Heart right ventricle (tissue), 16 donors: ENCODE measurements at regions of chr9 and their contacts with region 1.

Region 1: DNA sequence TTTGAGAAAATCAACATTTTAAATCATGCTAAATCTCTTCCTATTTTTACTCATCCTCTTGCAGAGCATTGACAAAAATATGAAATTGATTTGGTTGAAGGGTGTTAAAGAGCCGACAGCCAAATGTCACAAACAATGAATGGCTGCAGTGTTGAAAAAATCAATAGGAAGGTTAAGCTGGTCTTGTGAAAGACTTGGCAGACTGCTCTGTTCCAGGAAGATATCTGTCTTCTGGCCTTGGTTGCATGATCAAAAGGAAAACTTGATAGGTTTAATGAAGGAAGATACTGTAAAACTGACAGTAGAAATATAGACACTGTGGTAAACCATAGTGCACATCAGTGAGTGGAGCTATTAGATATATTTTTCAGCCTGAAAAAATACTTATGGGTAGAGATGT is 103.6 kb downstream of the PBX3 start:
- DNase-seq: no peak
- ATAC-seq: no peak
- H3K4me3 ChIP-seq: no peak overlapping the region
- H3K27ac ChIP-seq: no peak overlapping the region
- H3K4me1 ChIP-seq: peaks cover 0 to 30% (median 10%) of the 10 kb centered on the region in 9 donors
- H3K27me3 ChIP-seq: no peaks in the 10 kb centered on the region
- CTCF ChIP-seq: no peak

Region 2: GRCh38 chr9:125829743-125830142 is 21.0 kb before region 1 on chr9:
- intact Hi-C with region 1: loop called in 1 of 10 experiments (anchors 1 kb)
- DNase-seq: peak in 1 of 2 donors; percentile 21
- ATAC-seq: peak in 6 of 8 donors; percentile 58 to 86 (median 70)
- H3K4me3 ChIP-seq: peak overlapping the region in 9 of 10 donors; percentile 6 to 55 (median 49)
- H3K27ac ChIP-seq: peak overlapping the region in 4 of 10 donors; percentile 8 to 63 (median 22)
- H3K4me1 ChIP-seq: peaks cover 0 to 20% (median 0%) of the 10 kb centered on the region in 9 donors
- H3K27me3 ChIP-seq: no peaks in the 10 kb centered on the region
- CTCF ChIP-seq: no peak

Region 3: GRCh38 chr9:125904155-125904851 is 53.5 kb after region 1 on chr9:
- intact Hi-C with region 1: no loop called
- DNase-seq: no peak
- ATAC-seq: peak in 4 of 8 donors; percentile 37 to 61 (median 50)
- H3K4me3 ChIP-seq: peak overlapping the region in 1 of 10 donors; percentile 5
- H3K27ac ChIP-seq: peak overlapping the region in 1 of 10 donors; percentile 57
- H3K4me1 ChIP-seq: peaks cover 0 to 43% (median 15%) of the 10 kb centered on the region in 9 donors
- H3K27me3 ChIP-seq: no peaks in the 10 kb centered on the region
- CTCF ChIP-seq: no peak

Region 4: GRCh38 chr9:126036881-126037291 is 186.1 kb after region 1 on chr9:
- intact Hi-C with region 1: no loop called
- DNase-seq: no peak
- ATAC-seq: no peak
- H3K4me3 ChIP-seq: no peak overlapping the region
- H3K27ac ChIP-seq: no peak overlapping the region
- H3K4me1 ChIP-seq: no peaks in the 10 kb centered on the region
- H3K27me3 ChIP-seq: peaks cover 0 to 13% (median 7%) of the 10 kb centered on the region in 7 donors
- CTCF ChIP-seq: no peak